CD8-positive, alpha-beta memory T cell (primary cell): ENCODE measurements at regions of chr9 and their contacts with region 1.

Region 1: DNA sequence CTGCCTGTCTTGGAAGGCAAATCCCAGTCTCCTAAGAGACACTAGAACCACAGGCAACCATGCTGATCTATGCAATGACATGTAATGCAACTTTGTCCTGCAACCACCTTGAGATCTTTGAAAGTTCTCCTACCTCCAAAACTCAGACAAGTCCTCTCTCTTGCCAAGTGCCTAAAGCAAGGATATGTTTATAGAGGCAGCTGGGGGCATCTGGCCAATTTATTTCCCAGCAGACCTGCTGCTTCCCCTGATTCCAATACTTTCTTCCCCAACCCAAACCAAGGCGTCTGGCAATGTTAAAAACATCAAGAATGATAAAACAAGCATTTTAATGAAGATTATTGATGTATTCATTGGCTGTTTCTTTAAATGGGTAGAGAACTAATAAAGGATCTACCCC is 138.4 kb downstream of the DOCK8 start:
- DNase-seq: no peak
- H3K4me3 ChIP-seq: no peak overlapping the region
- H3K4me3 Mint-ChIP-seq: no peak overlapping the region
- H3K27ac ChIP-seq: no peak overlapping the region
- H3K27ac Mint-ChIP-seq: peak overlapping the region in 6 of 8 donors; percentile 17 to 94 (median 75)
- H3K4me1 ChIP-seq: peaks cover 4% of the 10 kb centered on the region
- H3K4me1 Mint-ChIP-seq: peaks cover 38 to 70% (median 69%) of the 10 kb centered on the region in 3 donors
- H3K27me3 ChIP-seq: no peaks in the 10 kb centered on the region
- H3K27me3 Mint-ChIP-seq: peaks cover 0 to 1% of the 10 kb centered on the region in 2 donors

Region 2: DNA sequence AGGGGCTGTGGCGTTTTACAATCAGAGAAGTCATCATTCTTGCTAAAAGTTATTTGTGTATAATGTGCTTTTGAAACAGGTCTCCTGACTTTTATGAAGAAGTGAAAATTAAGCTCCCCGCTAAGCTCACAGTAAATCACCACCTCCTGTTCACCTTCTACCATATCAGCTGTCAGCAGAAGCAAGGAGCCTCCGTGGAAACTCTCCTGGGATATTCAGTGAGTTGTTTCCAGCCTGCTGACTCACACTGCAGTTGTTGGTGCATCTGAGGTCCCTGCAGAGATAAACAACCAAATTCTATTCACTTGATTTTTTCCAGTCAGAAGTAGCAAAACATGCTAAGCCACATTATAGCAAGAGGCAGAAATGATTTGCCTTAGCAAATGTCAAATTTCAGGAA is 18.3 kb after region 1 on chr9:
- CTCF ChIA-PET with region 1: no interaction called
- POLR2A ChIA-PET with region 1: no interaction called
- DNase-seq: no peak
- H3K4me3 ChIP-seq: no peak overlapping the region
- H3K4me3 Mint-ChIP-seq: no peak overlapping the region
- H3K27ac ChIP-seq: no peak overlapping the region
- H3K27ac Mint-ChIP-seq: peak overlapping the region in 2 of 8 donors; percentile 2 to 47
- H3K4me1 ChIP-seq: no peaks in the 10 kb centered on the region
- H3K4me1 Mint-ChIP-seq: no peaks in the 10 kb centered on the region
- H3K27me3 ChIP-seq: no peaks in the 10 kb centered on the region
- H3K27me3 Mint-ChIP-seq: no peaks in the 10 kb centered on the region

Region 3: DNA sequence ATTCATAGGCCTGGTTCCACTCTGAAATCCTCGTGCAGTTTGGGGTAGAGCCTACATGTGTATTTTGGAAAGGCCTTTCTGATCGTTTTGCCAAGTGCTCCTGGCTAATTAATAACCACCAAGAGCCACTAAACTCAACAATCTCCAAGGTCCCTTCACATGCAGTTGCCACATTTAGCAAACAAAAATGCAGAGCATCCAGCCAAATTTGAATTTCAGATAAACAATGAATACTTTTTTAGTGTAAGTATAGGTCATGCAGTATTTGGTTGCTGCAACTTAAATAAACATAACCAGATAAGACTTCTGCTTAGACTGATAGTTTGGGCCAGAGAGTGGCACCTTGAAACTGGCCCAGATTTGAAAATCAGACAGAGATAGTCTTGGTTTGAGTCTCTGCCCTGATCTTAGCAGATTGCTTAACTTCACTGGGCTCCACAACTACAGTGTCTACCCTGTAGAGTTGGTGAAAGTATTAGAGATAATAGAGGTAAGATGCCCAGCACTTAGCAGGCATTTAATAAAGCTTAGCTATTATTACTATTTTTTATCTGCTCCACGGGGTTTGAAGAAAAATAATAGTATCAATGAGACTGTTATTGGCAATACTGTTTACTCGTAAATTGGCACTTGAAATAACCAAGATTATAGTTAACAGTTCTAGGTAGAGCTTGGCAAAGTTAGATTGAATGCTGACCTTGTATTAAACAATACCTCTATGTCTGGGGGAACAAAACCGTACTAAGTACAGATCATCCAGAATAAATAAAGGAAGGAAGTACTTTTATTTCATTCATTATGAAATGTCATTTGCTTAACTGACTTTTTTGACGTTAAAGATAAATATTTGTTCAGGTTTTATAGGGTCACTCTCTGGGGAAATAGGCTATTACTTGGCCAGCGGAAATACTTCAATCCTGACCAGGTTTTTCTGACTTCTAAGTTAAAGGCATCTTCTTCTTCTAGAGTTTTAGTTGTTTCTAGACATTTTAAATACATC is 136.4 kb after region 1 on chr9:
- CTCF ChIA-PET with region 1: no interaction called
- POLR2A ChIA-PET with region 1: interaction called, 10 read pairs
- DNase-seq: no peak
- H3K4me3 ChIP-seq: no peak overlapping the region
- H3K4me3 Mint-ChIP-seq: no peak overlapping the region
- H3K27ac ChIP-seq: no peak overlapping the region
- H3K27ac Mint-ChIP-seq: no peak overlapping the region
- H3K4me1 ChIP-seq: no peaks in the 10 kb centered on the region
- H3K4me1 Mint-ChIP-seq: no peaks in the 10 kb centered on the region
- H3K27me3 ChIP-seq: no peaks in the 10 kb centered on the region
- H3K27me3 Mint-ChIP-seq: peaks cover 0 to 4% of the 10 kb centered on the region in 2 donors